Body of pancreas (tissue), 4 donors: ENCODE measurements at regions of chr19 and their contacts with region 1.

Region 1: DNA sequence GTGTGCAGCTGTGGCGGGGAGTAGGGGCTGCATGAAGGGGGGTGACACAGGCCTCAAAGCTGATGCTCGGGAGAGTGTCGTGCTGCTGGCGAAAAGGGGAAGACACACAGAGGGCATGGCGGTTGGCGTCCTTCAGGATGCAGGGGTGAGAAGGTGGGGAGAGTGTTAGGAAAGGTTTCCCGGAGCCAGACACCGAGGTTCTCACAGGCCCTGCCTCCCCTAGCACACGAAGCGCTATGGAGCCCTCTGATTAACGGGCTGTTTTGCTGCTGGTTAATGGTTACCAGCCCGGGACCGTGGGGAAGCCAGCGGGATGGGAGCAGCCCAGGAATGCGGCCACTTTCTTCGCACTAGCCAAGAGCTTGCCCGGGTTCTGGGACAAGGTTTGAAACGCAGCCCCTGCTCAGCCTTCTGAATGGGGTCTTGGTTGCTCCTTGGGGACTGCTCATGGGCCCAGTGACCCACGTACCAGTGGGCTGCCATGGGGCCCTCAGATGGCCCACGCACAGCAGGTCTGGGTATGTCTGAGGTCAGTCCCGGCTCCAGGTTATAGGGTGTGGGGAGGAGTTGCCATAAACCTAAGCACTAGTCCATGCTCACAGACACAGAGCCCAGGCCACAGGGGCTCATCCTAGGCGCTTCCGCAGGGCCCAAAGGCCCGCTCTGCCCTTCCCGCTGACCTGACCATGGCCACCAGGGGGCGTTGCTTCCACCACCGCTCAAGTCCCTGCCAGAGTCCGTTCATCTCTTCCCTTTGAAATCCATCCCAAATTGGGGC is 31.3 kb upstream of the ISYNA1 start:
- DNase-seq: peak; percentile 66 to 73 (median 71)
- ATAC-seq: peak; percentile 68
- H3K4me3 ChIP-seq: no peak overlapping the region
- H3K27ac ChIP-seq: peak overlapping the region; percentile 75 to 89 (median 84)
- H3K4me1 ChIP-seq: peaks cover 73% of the 10 kb centered on the region
- H3K27me3 ChIP-seq: no peaks in the 10 kb centered on the region
- CTCF ChIP-seq: peak; percentile 67 to 81 (median 73)
- POLR2A ChIP-seq: peak in 1 of 3 donors; percentile 20

Region 2: DNA sequence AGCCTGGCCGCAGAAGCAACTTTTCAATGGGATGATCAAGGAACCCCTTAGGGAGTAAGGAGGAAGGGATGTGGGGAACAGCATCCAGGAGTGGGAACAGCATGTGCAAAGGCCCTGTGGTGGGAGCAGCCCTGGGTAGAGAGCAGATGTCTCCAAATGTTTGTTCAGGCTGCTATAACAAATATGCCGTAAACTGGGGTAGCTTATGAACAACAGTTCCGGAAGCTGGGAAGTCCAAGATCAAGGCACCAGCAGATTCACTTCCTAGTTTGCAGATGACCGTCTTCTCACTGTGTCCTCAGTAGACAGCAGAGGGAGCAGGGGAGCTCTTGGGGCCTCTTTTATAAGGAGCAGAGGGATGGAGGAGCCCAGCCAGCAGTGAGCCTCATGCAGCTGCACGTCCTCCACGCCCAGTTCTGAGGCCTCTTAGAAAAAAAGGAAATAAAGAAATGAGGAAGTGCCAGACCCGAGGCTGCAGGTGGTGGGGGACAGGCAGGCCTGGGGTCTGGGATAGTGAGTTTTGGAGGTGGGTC is 67.6 kb before region 1 on chr19:
- intact Hi-C with region 1: no loop called
- DNase-seq: peak in 2 of 4 donors; percentile 48 to 83
- ATAC-seq: peak; percentile 30
- H3K4me3 ChIP-seq: no peak overlapping the region
- H3K27ac ChIP-seq: peak overlapping the region in 3 of 4 donors; percentile 41 to 61 (median 46)
- H3K4me1 ChIP-seq: peaks cover 38% of the 10 kb centered on the region
- H3K27me3 ChIP-seq: peaks cover 0 to 7% of the 10 kb centered on the region in 2 donors
- CTCF ChIP-seq: peak in 3 of 7 experiments; percentile 4 to 24 (median 21)
- POLR2A ChIP-seq: peak in 1 of 3 donors; percentile 34

Region 3: GRCh38 chr19:18562086-18562485 is 92.8 kb after region 1 on chr19:
- intact Hi-C with region 1: loop called (anchors 10 kb)
- DNase-seq: peak in 1 of 4 donors; percentile 19
- ATAC-seq: no peak
- H3K4me3 ChIP-seq: no peak overlapping the region
- H3K27ac ChIP-seq: peak overlapping the region in 1 of 4 donors; percentile 17
- H3K4me1 ChIP-seq: peaks cover 15% of the 10 kb centered on the region
- H3K27me3 ChIP-seq: no peaks in the 10 kb centered on the region
- CTCF ChIP-seq: no peak
- POLR2A ChIP-seq: no peak